Activated T-helper 1 cell treated with anti-CD3 and anti-CD28 coated beads, Interleukin-12 subunit alpha, Interleukin-12 subunit beta, Interleukin-2, Interleukin-4 antibody, amounts not matched to agents 30 ng/mL and 10 ng/mL and 1 ng/mL, durations not matched to agents 14 hours and 24 hours and 36 hours (primary cell): ENCODE measurements at regions of chr6 and their contacts with region 1.

Region 1: DNA sequence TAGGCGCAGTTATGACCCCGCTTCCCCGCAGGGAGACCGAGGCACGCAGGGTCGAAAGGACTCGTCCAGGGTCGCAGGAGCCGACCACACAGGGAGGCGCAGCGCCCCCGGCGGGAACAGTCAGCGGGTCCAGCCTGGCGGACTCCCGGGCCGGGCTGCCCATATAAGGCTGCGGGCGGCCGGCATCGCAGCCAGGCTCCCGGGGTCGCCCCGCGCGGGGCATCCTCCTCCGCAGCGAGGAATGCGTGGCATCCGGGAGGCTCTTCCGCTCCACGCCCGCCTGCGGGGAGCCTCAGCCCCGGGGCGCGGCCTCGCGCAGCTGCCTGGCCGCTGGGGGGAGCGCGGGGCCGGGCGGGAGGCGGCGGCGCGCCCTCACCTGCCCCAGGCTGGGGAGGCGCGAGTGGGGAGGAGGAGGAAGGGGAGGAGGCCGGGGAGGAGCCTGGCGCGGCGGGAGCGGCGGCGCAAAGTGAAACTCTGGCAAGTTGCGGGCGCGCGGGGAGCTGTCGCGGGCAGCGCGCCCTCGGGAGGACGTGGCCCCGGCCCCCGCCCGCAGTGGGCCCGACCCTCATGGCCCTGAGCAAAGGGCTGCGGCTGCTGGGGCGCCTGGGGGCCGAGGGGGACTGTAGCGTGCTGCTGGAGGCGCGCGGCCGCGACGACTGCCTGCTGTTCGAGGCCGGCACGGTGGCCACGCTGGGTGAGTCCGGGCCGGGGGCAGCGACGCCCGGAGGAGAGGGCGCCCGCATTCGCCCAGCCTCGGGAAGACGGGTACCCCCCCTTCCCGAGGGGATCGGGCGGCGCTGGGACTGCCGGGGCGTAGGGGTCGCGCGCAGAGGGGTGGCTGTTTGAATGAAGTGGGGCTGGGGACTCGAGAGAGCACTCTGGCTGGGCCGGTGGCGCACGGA is at the start of gene SYNJ2:
- DNase-seq: peak; percentile 85
- H3K4me3 Mint-ChIP-seq: peak within 1 kb of the TSS; percentile 95
- H3K27ac Mint-ChIP-seq: peak within 1 kb of the TSS; percentile 84
- H3K4me1 Mint-ChIP-seq: peaks cover 49% of the 10 kb centered on the region
- H3K27me3 Mint-ChIP-seq: peaks cover 10% of the 10 kb centered on the region
- total RNA-seq, gene SYNJ2: 29.0 and 31.2 TPM in 2 replicates

Region 2: GRCh38 chr6:157941101-157941863 is 40.4 kb before region 1 on chr6:
- intact Hi-C with region 1: loop called (anchors 2 kb)
- DNase-seq: no peak
- H3K4me3 Mint-ChIP-seq: no peak overlapping the region
- H3K27ac Mint-ChIP-seq: no peak overlapping the region
- H3K4me1 Mint-ChIP-seq: peaks cover 26% of the 10 kb centered on the region
- H3K27me3 Mint-ChIP-seq: no peaks in the 10 kb centered on the region

Region 3: GRCh38 chr6:157962601-157963302 is 18.9 kb before region 1 on chr6:
- intact Hi-C with region 1: loop called (anchors 1 kb)
- DNase-seq: no peak
- H3K4me3 Mint-ChIP-seq: peak overlapping the region; percentile 69
- H3K27ac Mint-ChIP-seq: peak overlapping the region; percentile 86
- H3K4me1 Mint-ChIP-seq: peaks cover 28% of the 10 kb centered on the region
- H3K27me3 Mint-ChIP-seq: peaks cover 1% of the 10 kb centered on the region

Region 4: GRCh38 chr6:158002951-158003853 is 21.6 kb after region 1 on chr6:
- intact Hi-C with region 1: loop called (anchors 1 kb)
- DNase-seq: no peak
- H3K4me3 Mint-ChIP-seq: peak overlapping the region; percentile 2
- H3K27ac Mint-ChIP-seq: peak overlapping the region; percentile 64
- H3K4me1 Mint-ChIP-seq: peaks cover 47% of the 10 kb centered on the region
- H3K27me3 Mint-ChIP-seq: no peaks in the 10 kb centered on the region

Region 5: DNA sequence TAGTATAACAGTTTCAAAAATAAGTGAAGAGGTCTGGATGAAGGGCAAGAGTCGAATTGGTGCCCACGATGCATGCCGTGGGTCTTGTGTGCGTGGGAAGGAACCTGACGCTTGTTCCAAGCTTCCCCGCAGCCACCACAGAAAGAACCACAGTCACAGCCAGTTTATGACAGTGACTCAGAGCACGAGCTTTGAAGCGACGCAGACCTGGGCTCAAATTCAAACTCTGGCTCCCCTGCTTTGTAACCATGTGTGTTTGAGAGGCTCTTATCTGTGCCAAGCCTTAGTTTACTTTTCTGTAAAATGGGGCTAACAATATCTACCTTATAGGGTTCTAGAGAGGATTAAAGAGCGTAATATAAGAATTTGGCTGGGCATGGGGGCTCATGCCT is 65.5 kb after region 1 on chr6:
- intact Hi-C with region 1: no loop called
- DNase-seq: peak; percentile 55
- H3K4me3 Mint-ChIP-seq: peak overlapping the region; percentile 53
- H3K27ac Mint-ChIP-seq: peak overlapping the region; percentile 66
- H3K4me1 Mint-ChIP-seq: peaks cover 38% of the 10 kb centered on the region
- H3K27me3 Mint-ChIP-seq: no peaks in the 10 kb centered on the region

Region 6: DNA sequence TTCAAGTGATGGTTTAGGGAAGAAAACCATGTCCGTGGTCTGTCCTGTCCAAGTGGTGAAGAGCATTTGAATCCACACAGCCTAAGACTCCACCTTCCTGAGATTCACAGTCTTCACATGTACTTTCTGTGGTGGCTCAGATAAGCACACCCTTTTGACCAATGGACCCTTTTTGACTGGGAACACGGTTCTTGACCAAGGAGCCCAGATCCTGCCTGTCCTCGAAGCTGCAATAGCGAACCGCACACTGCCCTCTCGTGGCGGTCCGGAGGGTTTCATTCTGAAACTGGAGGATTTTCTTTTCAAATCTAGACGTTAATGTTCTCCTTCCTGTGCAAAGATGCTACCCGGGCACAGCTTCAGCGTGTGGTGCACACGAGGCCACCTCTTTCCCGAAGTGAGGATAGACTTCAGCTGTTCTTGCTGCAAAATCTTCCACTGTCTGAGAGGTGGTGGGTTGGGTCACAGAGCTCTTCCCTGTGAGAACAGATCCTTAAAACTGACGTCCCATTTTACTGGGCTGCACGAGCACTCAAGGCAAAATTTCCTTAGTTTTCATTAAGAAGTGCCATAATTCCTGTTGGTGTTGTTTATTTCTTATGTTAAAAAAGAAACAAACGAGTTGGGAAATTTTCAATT is 90.6 kb after region 1 on chr6:
- intact Hi-C with region 1: loop called (anchors 1 kb)
- DNase-seq: peak; percentile 60
- H3K4me3 Mint-ChIP-seq: no peak overlapping the region
- H3K27ac Mint-ChIP-seq: peak overlapping the region; percentile 70
- H3K4me1 Mint-ChIP-seq: peaks cover 55% of the 10 kb centered on the region
- H3K27me3 Mint-ChIP-seq: no peaks in the 10 kb centered on the region